ENCODE measurements at regions of chr11 and their contacts with region 1.

Region 1: GRCh38 chr11:57493507-57494503 is 21.7 kb downstream of the SLC43A1 start:
- DNase-seq: peak in 1 of 2 experiments; percentile 73
- ATAC-seq: peak; percentile 28 to 84; a peak in 3 of 6 replicates
- H3K4me3 ChIP-seq: no peak overlapping the region
- H3K27ac ChIP-seq: peak overlapping the region; percentile 78 to 86
- H3K4me1 ChIP-seq: peaks cover 7% of the 10 kb centered on the region
- CTCF ChIP-seq: peak; percentile 71
- EP300 ChIP-seq: no peak
- POLR2A ChIP-seq: no peak
- RAD21 ChIP-seq: peak; percentile 59 to 66

Region 2: GRCh38 chr11:57345555-57346211 is 148.1 kb before region 1 on chr11:
- CTCF ChIA-PET with region 1: interaction called, 10 read pairs
- POLR2A ChIA-PET with region 1: interaction called, 3 read pairs
- DNase-seq: peak; percentile 81 to 84
- ATAC-seq: peak; percentile 66 to 78
- H3K4me3 ChIP-seq: no peak overlapping the region
- H3K27ac ChIP-seq: peak overlapping the region; percentile 50 to 75; a peak in 5 of 6 replicates
- H3K4me1 ChIP-seq: peaks cover 18% of the 10 kb centered on the region
- CTCF ChIP-seq: peak; percentile 91
- EP300 ChIP-seq: no peak
- POLR2A ChIP-seq: no peak
- RAD21 ChIP-seq: peak; percentile 82 to 97

Region 3: GRCh38 chr11:57424137-57424791 is 69.5 kb before region 1 on chr11:
- CTCF ChIA-PET with region 1: no interaction called
- POLR2A ChIA-PET with region 1: no interaction called
- DNase-seq: no peak
- ATAC-seq: peak in 1 of 2 experiments; percentile 17; a peak in 1 of 6 replicates
- H3K4me3 ChIP-seq: no peak overlapping the region
- H3K27ac ChIP-seq: peak overlapping the region in 1 of 2 experiments; percentile 58; a peak in 4 of 6 replicates
- H3K4me1 ChIP-seq: peaks cover 27% of the 10 kb centered on the region
- CTCF ChIP-seq: no peak
- EP300 ChIP-seq: no peak
- POLR2A ChIP-seq: no peak
- RAD21 ChIP-seq: no peak

Region 4: GRCh38 chr11:57474017-57474802 is 19.6 kb before region 1 on chr11:
- CTCF ChIA-PET with region 1: interaction called, 182 read pairs
- POLR2A ChIA-PET with region 1: no interaction called
- DNase-seq: no peak
- ATAC-seq: peak; percentile 10 to 12; a peak in 3 of 6 replicates
- H3K4me3 ChIP-seq: no peak overlapping the region
- H3K27ac ChIP-seq: 0 out of 6 replicates have a peak overlapping the region, but pooled peaks of 1 of the 2 experiments have one; percentile 14
- H3K4me1 ChIP-seq: peaks cover 46% of the 10 kb centered on the region
- CTCF ChIP-seq: no peak
- EP300 ChIP-seq: no peak
- POLR2A ChIP-seq: no peak
- RAD21 ChIP-seq: no peak

Region 5: GRCh38 chr11:57504511-57504910 is 10.7 kb after region 1 on chr11:
- CTCF ChIA-PET with region 1: interaction called, 29 read pairs
- POLR2A ChIA-PET with region 1: no interaction called
- DNase-seq: no peak
- ATAC-seq: no peak
- H3K4me3 ChIP-seq: no peak overlapping the region
- H3K27ac ChIP-seq: no peak overlapping the region
- H3K4me1 ChIP-seq: peaks cover 8% of the 10 kb centered on the region; the same call in 2 of the 3 replicates
- CTCF ChIP-seq: no peak
- EP300 ChIP-seq: no peak
- POLR2A ChIP-seq: no peak
- RAD21 ChIP-seq: no peak

Region 6: DNA sequence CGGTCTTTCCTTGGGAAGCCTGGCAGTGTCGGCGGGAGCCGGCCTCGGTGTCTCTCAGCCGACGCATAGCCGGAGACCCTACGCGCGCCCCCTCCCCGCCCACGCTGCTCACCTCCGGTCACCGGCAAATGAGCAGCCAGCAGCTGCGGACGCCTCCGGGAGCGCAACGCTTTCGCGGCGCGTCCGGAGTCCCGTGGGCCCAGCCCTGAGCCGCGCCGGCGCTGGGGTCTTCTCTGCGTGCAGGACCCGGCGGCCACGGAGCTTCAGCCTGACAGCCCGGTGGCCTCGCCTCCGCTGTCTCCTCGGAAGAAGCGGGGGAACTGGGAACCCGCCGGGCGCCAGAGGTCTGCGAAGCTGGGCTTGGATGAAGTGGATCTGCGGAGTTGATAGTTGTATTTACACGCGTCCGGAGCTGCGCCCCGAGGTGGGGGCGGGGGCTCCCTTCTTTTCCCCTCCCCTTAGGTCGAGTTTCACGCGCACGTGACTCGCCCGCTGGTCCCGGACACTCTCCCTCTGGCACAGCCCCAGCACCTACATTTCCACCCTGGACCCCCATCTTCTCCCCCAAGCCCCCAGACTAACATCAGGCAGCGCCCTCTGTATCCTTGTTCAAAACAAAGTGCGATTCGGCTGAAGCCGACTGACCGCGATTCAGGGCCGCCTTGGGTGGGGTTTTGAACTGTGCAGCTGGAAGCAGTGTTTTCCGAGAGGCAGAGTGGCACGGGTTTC is 21.7 kb after region 1 on chr11 and contains the start of gene SLC43A1:
- CTCF ChIA-PET with region 1: interaction called, 36 read pairs
- POLR2A ChIA-PET with region 1: interaction called, 3 read pairs
- DNase-seq: peak in 1 of 2 experiments; percentile 65
- ATAC-seq: peak; percentile 51 to 76
- H3K4me3 ChIP-seq: peak within 1 kb of the TSS; percentile 78
- H3K27ac ChIP-seq: peak within 1 kb of the TSS; percentile 68 to 85
- H3K4me1 ChIP-seq: peaks cover 4% of the 10 kb centered on the region; the same call in 1 of the 3 replicates
- CTCF ChIP-seq: no peak
- EP300 ChIP-seq: no peak
- POLR2A ChIP-seq: no peak
- RAD21 ChIP-seq: no peak
- polyA plus RNA-seq, gene SLC43A1: 4.6 and 5.3 TPM in 2 replicates

Region 7: GRCh38 chr11:57521116-57521515 is 27.3 kb after region 1 on chr11:
- CTCF ChIA-PET with region 1: interaction called, 299 read pairs
- POLR2A ChIA-PET with region 1: interaction called, 3 read pairs
- DNase-seq: no peak
- ATAC-seq: no peak
- H3K4me3 ChIP-seq: no peak overlapping the region
- H3K27ac ChIP-seq: no peak overlapping the region
- H3K4me1 ChIP-seq: peaks cover 2% of the 10 kb centered on the region; the same call in 1 of the 3 replicates
- CTCF ChIP-seq: no peak
- EP300 ChIP-seq: no peak
- POLR2A ChIP-seq: no peak
- RAD21 ChIP-seq: no peak

Region 8: GRCh38 chr11:57644748-57645688 is 151.2 kb after region 1 on chr11:
- CTCF ChIA-PET with region 1: interaction called, 30 read pairs
- POLR2A ChIA-PET with region 1: no interaction called
- DNase-seq: peak; percentile 76 to 85
- ATAC-seq: peak; percentile 60 to 76; a peak in 5 of 6 replicates
- H3K4me3 ChIP-seq: no peak overlapping the region
- H3K27ac ChIP-seq: no peak overlapping the region
- H3K4me1 ChIP-seq: peaks cover 32% of the 10 kb centered on the region
- CTCF ChIP-seq: peak; percentile 88
- EP300 ChIP-seq: no peak
- POLR2A ChIP-seq: no peak
- RAD21 ChIP-seq: peak; percentile 74 to 76

Measured in A549 (cell line).